Activated CD4-positive, alpha-beta memory T cell treated with anti-CD3 and anti-CD28 coated beads for 36 hours (primary cell): ENCODE measurements at regions of chr5 and their contacts with region 1.

Region 1: GRCh38 chr5:75511435-75512384 is at the starts of genes CERT1 and POLK:
- DNase-seq: peak; percentile 99
- H3K4me3 Mint-ChIP-seq: peak within 1 kb of the TSS; percentile 98
- H3K27ac Mint-ChIP-seq: peak within 1 kb of the TSS; percentile 96
- H3K4me1 Mint-ChIP-seq: peaks cover 55% of the 10 kb centered on the region
- H3K27me3 Mint-ChIP-seq: no peaks in the 10 kb centered on the region
- total RNA-seq, gene CERT1: 32.3 to 34.4 TPM
- total RNA-seq, gene POLK: 33.9 to 36.5 TPM

Region 2: GRCh38 chr5:74766849-74767578 is 744.7 kb before region 1 on chr5 and contains the starts of genes GFM2 and NSA2:
- CTCF ChIA-PET with region 1: no interaction called
- POLR2A ChIA-PET with region 1: no interaction called
- intact Hi-C with region 1: loop called (anchors 2 kb)
- DNase-seq: peak; percentile 96
- H3K4me3 Mint-ChIP-seq: peak within 1 kb of the TSS; percentile 100
- H3K27ac Mint-ChIP-seq: peak within 1 kb of the TSS; percentile 97
- H3K4me1 Mint-ChIP-seq: peaks cover 36% of the 10 kb centered on the region
- H3K27me3 Mint-ChIP-seq: no peaks in the 10 kb centered on the region
- total RNA-seq, gene GFM2: 30.9 to 33.0 TPM
- total RNA-seq, gene NSA2: 96.1 to 98.0 TPM

Region 3: DNA sequence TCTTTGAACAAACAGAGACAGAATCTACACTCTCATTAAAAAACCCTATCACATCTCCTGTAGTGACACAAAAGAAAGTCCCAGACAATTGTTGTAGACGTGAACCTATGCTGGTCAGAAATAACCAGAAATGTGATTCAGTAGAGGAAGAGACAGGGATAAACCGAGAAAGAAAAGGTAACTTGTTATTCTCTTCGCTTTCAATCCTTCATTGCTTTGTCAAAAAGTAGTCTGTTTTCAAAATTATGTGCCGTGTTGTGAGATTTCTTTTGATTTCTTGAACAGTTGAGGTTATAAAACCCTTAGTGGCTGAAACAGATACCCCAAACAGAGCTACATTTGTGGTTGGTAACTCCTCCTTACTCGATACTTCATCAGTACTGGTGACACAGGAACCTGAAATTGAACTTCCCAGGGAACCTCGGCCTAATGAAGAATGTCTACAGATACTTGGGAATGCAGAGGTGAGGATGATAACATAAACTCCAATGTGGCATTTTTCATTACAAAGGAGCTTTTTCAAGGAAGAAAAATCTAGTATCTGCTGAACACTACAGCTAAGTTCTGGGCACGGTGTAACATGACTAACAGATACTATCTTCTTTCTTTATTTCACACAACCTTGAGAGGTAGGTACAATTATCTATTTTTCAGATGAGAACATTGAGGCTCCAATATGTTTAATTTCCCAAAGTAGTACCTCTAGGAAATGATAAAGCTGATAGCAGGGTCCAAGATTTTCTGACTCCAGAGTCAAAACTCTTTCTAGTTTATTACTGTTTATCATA is 160.4 kb before region 1 on chr5:
- CTCF ChIA-PET with region 1: no interaction called
- POLR2A ChIA-PET with region 1: no interaction called
- intact Hi-C with region 1: loop called (anchors 2 kb)
- DNase-seq: no peak
- H3K4me3 Mint-ChIP-seq: no peak overlapping the region
- H3K27ac Mint-ChIP-seq: peak overlapping the region; percentile 74
- H3K4me1 Mint-ChIP-seq: peaks cover 27% of the 10 kb centered on the region
- H3K27me3 Mint-ChIP-seq: no peaks in the 10 kb centered on the region

Region 4: DNA sequence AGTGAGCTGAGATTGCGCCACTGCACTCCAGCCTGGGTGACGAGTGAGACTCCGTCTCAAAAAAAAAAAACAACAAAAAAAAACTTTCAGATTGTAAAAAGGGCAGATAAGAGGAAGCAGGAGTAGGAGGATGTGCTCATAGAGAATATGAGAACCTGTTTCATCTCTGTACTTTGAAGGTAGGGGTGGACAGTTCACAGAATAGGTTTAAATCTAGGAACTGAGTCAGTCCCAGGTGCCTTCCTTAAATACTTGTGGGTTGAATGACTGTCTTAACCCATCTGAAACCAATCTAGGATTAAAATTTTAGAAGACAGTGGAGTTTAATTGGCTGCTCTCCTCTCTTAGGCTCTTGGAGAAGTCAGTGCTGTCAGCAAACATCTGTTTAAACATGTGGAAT is 12.4 kb after region 1 on chr5:
- CTCF ChIA-PET with region 1: interaction called, 4 read pairs
- POLR2A ChIA-PET with region 1: no interaction called
- intact Hi-C with region 1: loop called (anchors 2 kb)
- DNase-seq: peak; percentile 37
- H3K4me3 Mint-ChIP-seq: no peak overlapping the region
- H3K27ac Mint-ChIP-seq: peak overlapping the region; percentile 57
- H3K4me1 Mint-ChIP-seq: peaks cover 63% of the 10 kb centered on the region
- H3K27me3 Mint-ChIP-seq: no peaks in the 10 kb centered on the region

Region 5: GRCh38 chr5:75551471-75551870 is 39.8 kb after region 1 on chr5:
- CTCF ChIA-PET with region 1: no interaction called
- POLR2A ChIA-PET with region 1: no interaction called
- intact Hi-C with region 1: no loop called
- DNase-seq: no peak
- H3K4me3 Mint-ChIP-seq: no peak overlapping the region
- H3K27ac Mint-ChIP-seq: no peak overlapping the region
- H3K4me1 Mint-ChIP-seq: no peaks in the 10 kb centered on the region
- H3K27me3 Mint-ChIP-seq: no peaks in the 10 kb centered on the region

Region 6: GRCh38 chr5:75717082-75717922 is 205.6 kb after region 1 on chr5 and contains the start of gene POC5:
- CTCF ChIA-PET with region 1: no interaction called
- POLR2A ChIA-PET with region 1: interaction called, 3 read pairs
- intact Hi-C with region 1: loop called (anchors 1 kb)
- DNase-seq: peak; percentile 99
- H3K4me3 Mint-ChIP-seq: peak within 1 kb of the TSS; percentile 98
- H3K27ac Mint-ChIP-seq: peak within 1 kb of the TSS; percentile 99
- H3K4me1 Mint-ChIP-seq: peaks cover 28% of the 10 kb centered on the region
- H3K27me3 Mint-ChIP-seq: no peaks in the 10 kb centered on the region
- total RNA-seq, gene POC5: 20.7 to 21.8 TPM

Region 7: DNA sequence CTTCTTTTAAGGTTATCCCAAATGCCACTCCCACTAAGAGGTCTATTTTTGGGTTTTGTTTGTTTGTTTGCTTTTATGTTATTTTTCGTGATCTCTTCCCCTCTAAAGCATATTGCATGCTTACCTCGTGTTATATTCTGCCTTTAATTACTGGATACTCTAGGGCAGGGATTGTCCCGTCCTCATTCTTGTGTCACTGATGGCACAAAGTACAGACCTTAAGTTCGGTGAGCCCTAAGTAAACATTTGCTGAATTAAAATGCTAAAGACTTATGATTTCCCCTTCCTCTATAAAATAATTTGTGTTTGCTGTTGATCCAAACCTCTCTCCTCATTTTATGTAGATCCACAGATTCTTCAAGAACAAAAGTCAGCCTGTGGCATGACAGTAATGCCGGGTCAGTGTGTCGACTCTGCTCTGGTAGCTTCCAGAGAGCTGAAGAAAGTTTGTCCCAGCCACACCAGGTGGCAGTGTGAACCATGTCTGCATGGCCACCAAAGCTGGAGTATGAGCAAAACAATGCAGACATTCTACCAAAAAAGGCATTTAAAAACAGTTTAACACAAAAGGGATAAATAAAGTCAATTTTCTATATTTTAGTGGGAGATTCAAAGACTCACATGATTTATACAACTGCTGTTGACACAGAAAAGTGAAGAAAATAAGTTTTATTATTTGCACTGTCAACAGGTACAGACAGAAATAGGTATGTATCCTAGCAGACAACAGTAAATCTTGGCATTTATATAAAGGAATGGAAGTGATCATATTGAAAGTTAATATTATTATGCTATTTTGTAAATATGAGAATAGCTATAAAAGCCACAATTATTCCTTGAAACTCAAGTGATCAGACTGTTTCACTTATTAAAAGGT is 223.4 kb after region 1 on chr5:
- CTCF ChIA-PET with region 1: no interaction called
- POLR2A ChIA-PET with region 1: no interaction called
- intact Hi-C with region 1: no loop called
- DNase-seq: peak; percentile 27
- H3K4me3 Mint-ChIP-seq: no peak overlapping the region
- H3K27ac Mint-ChIP-seq: no peak overlapping the region
- H3K4me1 Mint-ChIP-seq: no peaks in the 10 kb centered on the region
- H3K27me3 Mint-ChIP-seq: peaks cover 9% of the 10 kb centered on the region